PC-9 (cell line): ENCODE measurements at regions of chr10 and their contacts with region 1.

Region 1: DNA sequence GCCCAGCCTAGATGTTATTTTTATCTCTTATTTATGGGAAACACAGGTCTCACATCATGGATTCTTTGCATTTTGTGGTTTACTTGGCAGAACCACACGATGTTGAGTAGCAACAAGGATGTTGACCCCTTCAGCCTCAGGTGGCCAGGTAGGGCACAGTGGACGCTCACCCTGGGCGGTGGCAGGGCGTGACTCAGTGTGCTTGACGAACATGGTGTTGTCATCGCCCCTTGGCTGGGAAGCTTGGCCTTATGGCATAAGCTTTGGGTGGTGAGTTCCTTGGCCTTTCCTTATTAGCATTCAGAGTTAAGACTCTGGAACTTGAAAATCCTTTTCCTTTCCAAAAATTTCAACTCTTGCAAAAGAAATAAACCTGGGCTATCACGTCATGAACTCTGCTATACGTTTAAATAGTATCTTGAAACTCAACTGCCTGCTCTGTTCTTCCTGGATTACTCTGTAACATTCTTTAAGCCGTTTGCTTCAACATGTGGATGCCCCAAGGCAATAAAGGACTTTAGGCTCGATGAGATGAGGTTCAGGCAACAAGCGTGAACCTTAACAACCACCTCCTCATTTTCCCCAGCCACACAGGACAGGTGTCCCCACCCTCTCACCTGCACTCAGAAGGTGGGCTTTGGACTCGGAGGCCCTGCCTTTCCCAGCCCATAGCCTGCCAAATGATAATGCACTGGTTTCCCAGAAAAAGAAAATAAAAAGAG is 22.5 kb upstream of the ECHDC3 start:
- DNase-seq: peak; percentile 91 to 96
- H3K4me3 ChIP-seq: no peak overlapping the region
- H3K27ac ChIP-seq: peak overlapping the region; percentile 64
- H3K4me1 ChIP-seq: peaks cover 34% of the 10 kb centered on the region
- H3K27me3 ChIP-seq: no peaks in the 10 kb centered on the region
- CTCF ChIP-seq: no peak

Region 2: GRCh38 chr10:11213137-11213536 is 506.5 kb before region 1 on chr10:
- CTCF ChIA-PET with region 1: no interaction called
- POLR2A ChIA-PET with region 1: no interaction called
- intact Hi-C with region 1: no loop called
- DNase-seq: no peak
- H3K4me3 ChIP-seq: no peak overlapping the region
- H3K27ac ChIP-seq: no peak overlapping the region
- H3K4me1 ChIP-seq: no peaks in the 10 kb centered on the region
- H3K27me3 ChIP-seq: peaks cover 59% of the 10 kb centered on the region
- CTCF ChIP-seq: no peak

Region 3: DNA sequence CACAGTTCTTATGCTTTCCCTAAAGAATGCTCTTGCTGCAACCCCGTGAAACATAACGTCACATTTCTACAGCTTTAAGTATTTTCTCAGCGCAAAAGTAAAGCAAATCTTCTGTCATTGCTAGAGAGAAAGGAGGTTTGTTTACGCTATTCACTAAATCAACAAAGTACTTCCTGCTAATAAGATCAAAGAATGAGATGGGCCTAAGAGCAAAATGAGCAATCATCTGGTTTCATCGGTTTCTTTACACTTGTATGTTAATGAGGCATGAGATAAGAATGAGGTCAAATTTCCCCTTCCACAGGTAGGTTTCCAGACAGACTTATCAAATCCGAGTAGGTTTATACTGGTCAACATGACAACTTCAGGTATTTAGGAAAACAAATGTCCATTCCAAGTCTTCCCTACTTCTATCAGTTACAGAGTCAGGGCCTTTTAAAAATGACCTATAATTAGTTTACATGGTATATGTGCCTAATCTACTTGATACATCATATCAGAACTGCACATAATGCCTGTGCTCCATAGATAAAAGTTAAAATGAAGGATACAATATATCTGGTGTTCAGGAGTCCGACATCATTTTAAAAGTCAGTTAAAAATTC is 116.6 kb before region 1 on chr10:
- CTCF ChIA-PET with region 1: no interaction called
- POLR2A ChIA-PET with region 1: no interaction called
- intact Hi-C with region 1: loop called (anchors 2 kb)
- DNase-seq: peak in 1 of 2 experiments; percentile 94
- H3K4me3 ChIP-seq: peak overlapping the region; percentile 31; the same call in 1 of the 2 replicates
- H3K27ac ChIP-seq: peak overlapping the region; percentile 90
- H3K4me1 ChIP-seq: peaks cover 29% of the 10 kb centered on the region
- H3K27me3 ChIP-seq: no peaks in the 10 kb centered on the region
- CTCF ChIP-seq: no peak

Region 4: GRCh38 chr10:11655836-11656235 is 63.8 kb before region 1 on chr10:
- CTCF ChIA-PET with region 1: no interaction called
- POLR2A ChIA-PET with region 1: no interaction called
- intact Hi-C with region 1: loop called (anchors 2 kb)
- DNase-seq: no peak
- H3K4me3 ChIP-seq: no peak overlapping the region
- H3K27ac ChIP-seq: no peak overlapping the region
- H3K4me1 ChIP-seq: no peaks in the 10 kb centered on the region
- H3K27me3 ChIP-seq: no peaks in the 10 kb centered on the region
- CTCF ChIP-seq: no peak